Ascending aorta (tissue), 2 donors: ENCODE measurements at regions of chr14 and their contacts with region 1.

Region 1: GRCh38 chr14:55201224-55202050 is 10.1 kb upstream of the DLGAP5 start:
- DNase-seq: no peak
- H3K4me3 ChIP-seq: no peak overlapping the region
- H3K27ac ChIP-seq: no peak overlapping the region
- H3K4me1 ChIP-seq: no peaks in the 10 kb centered on the region
- H3K27me3 ChIP-seq: no peaks in the 10 kb centered on the region
- CTCF ChIP-seq: no peak

Region 2: GRCh38 chr14:53285805-53286204 is 1915.6 kb before region 1 on chr14:
- intact Hi-C with region 1: loop called (anchors 10 kb)
- DNase-seq: no peak
- H3K4me3 ChIP-seq: no peak overlapping the region
- H3K27ac ChIP-seq: no peak overlapping the region
- H3K4me1 ChIP-seq: no peaks in the 10 kb centered on the region
- H3K27me3 ChIP-seq: no peaks in the 10 kb centered on the region
- CTCF ChIP-seq: no peak

Region 3: DNA sequence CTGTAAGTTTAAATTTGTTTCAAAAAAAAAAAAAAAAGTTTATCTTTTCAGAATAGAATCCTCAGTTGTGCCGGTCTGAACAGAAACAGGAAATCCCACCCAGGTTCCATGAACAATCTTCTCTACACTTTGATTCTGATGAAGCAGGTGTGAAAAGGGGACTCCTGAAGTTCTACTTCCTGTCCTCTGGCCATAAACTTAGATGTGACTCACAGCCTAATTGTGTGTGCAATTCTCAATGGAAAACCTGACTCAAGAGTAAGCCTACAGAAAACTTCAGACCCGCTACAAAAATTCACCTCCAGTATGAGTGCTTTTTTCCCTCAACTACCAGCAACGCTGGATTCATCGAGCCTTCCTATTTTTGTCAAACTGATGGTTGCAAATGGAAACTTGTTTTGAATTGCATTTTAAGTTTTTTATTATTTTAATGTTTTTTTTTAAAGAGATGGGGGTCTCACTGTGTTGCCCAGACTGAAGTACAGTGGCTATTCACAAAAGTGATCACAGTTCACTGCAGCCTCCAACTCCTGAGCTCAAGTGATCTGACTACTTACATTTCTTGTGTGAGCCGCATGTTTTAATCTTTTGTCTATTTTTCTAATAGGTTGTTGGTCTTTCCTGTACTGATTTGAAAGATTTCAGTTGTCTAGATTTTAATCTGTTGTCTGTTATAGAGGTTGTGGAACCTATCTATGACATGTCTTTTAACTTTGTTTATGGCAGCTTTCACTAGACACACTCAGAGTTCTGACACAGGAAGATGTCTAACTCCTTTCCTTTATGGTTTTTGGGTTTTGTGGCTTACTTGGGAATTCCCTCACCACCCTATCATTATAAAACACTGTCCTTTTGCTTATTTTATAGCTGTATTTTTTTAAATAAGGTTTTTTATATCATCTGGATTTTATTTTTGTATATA is 172.6 kb after region 1 on chr14:
- intact Hi-C with region 1: no loop called
- DNase-seq: no peak
- H3K4me3 ChIP-seq: no peak overlapping the region
- H3K27ac ChIP-seq: no peak overlapping the region
- H3K4me1 ChIP-seq: no peaks in the 10 kb centered on the region
- H3K27me3 ChIP-seq: no peaks in the 10 kb centered on the region
- CTCF ChIP-seq: no peak

Region 4: DNA sequence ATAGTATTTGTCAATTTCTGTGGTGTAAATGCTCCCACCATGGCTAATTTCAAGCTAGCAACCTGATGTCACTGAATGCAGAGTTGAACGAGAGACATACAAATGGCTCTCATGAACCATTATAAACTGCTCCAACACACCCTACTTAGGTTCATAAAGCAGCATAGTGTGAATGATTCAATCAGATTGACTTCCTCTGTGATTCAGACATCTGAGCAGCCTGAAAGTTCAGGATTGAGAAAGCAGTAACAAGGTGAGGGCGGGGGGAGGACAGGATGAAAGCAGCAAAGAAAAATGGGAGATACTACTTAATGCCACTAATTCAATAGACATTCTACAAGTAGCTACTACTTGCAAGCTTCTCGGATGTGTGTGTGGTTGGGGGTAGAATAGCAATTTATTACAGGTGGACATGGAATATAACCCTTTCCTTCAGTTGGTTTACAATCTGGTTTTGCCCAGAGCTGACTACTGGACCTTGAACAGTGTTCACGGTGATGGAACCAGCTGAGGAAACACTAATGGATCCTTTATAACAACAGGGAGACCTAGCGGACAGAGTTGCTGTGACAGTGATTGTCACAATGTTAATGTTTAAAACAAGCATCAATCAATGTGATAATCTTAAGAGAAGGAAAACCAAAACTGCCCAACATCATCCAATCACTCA is 864.3 kb after region 1 on chr14:
- intact Hi-C with region 1: no loop called
- DNase-seq: no peak
- H3K4me3 ChIP-seq: no peak overlapping the region
- H3K27ac ChIP-seq: no peak overlapping the region
- H3K4me1 ChIP-seq: no peaks in the 10 kb centered on the region
- H3K27me3 ChIP-seq: no peaks in the 10 kb centered on the region
- CTCF ChIP-seq: no peak